ENCODE measurements at regions of chr19 and their contacts with region 1.

Region 1: GRCh38 chr19:2302319-2303210 is 5.4 kb downstream of the LINGO3 start:
- DNase-seq: no peak
- CTCF ChIP-seq: no peak

Region 2: DNA sequence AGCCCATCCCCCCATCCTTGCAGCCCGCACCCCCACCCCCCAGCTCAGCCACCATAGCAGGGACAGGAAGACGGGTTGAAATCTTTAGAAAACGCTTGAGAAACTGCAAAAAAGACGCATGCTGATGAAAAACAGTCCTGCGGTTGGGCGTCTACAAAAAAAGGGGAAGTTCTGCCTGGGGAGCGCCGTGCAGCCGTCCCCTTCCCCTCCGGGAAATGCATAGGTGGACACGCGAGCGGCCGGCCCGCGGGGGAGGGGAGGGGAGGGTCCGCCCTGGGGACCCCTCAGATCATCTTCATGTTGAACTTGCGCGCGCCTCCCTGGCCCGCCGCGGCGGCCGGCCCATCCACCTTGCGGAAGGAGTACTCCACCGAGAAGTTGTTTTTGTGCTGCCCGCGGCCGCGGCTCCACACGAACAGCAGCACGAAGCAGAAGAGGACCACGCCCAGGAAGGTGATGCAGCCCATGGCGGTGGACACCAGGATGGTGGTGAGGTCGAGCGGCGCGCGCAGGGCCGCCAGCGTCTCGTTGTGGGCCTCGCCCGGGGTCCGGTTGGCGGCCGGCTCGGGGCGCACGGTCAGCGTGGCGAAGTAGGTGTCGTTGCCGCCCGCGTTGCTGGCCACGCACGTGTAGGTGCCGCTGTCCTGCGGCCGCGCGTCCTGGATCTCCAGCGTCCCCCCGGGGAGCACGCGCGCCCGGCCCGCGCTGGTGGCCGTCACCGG is 12.7 kb before region 1 on chr19:
- CTCF ChIA-PET with region 1: no interaction called
- POLR2A ChIA-PET with region 1: interaction called, 10 read pairs
- DNase-seq: peak; percentile 85
- CTCF ChIP-seq: no peak

Region 3: DNA sequence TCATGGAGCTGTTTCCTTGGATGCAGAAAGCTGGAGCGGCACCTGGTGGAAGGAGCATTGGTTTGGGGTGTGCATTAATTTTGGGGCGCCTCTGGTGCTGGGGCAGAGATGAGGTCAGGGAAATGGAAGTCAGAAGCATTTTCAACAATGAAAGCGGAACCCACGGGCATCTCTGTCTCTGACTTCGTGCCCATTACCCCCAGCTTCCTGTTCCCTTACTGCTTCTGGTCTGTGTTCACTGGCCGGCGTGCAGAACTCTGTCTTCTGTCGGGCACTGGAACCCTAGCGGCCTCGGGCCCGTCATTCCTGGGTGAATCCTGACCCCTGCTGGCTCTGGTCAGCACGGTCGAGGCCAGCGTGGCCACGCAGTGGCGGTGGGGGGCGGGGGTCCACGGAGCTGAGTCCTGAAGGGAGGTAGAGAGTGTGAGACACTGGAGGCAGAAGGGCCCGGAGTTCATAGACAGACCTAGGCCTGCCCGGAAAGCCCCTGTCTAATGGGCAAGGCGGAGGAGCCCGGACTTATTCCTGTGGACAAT is 13.3 kb after region 1 on chr19:
- CTCF ChIA-PET with region 1: interaction called, 17 read pairs
- POLR2A ChIA-PET with region 1: interaction called, 3 read pairs
- DNase-seq: peak; percentile 65
- CTCF ChIP-seq: peak; percentile 57